Ascending aorta (tissue), 2 donors: ENCODE measurements at regions of chr3 and their contacts with region 1.

Region 1: DNA sequence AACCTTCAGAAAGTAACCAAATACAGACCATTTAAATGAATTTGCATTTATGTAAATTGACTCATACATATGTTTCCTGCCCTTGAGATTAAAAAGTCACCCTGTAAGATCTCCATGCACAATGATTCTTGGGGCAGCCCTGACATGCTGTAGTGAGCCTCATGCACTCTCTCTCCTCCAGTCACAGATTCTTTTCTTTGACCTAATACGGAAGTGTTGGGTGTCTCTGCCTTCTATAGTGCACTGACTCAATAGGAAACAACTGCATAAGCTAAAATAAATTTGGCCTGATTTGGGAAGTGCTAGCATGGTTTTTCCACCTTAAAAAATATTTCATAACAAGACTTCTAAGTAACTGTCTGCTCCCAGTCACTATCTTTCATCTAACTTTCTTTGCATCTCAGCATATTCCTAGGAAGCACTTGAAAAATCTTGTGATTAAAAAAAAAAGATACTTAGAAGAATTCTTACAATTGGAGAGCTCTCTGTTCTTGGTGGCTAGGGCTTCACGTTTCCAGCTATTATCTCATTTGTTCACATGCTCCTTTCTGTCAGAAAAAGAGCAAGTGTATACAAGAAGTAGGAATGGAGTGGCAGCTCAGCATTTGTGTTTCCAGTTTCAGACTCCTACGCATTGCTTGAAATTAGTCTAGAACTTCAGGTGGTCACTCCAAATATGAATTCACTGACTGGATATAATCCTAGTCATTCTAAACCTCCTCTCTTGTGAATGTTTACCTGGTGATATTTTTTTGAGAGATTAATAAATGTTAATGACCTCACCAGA is 207.9 kb upstream of the COL8A1 start:
- DNase-seq: no peak
- H3K4me3 ChIP-seq: no peak overlapping the region
- H3K27ac ChIP-seq: peak overlapping the region; percentile 1 to 24
- H3K4me1 ChIP-seq: peaks cover 0 to 13% of the 10 kb centered on the region in 2 donors
- H3K27me3 ChIP-seq: no peaks in the 10 kb centered on the region
- CTCF ChIP-seq: no peak

Region 2: DNA sequence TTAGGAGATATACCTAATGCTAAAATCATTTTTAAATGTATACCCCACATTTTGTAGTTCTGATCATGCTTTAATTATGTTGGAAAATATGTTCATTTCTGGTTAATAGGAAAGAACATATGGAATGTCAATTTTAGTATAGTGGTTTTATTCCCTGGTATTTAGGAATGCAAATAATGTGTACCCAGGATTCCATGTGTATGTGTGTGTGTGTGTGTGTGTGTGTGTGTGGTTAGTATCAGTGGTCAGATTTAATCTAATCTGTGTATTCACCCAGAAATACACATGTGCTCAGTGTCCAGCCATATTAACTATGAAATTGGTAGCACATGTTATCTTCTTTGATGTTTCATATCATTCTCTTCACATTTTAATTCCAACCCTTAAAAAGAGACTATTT is 295.6 kb before region 1 on chr3:
- intact Hi-C with region 1: no loop called
- DNase-seq: no peak
- H3K4me3 ChIP-seq: no peak overlapping the region
- H3K27ac ChIP-seq: no peak overlapping the region
- H3K4me1 ChIP-seq: peaks cover 0 to 3% of the 10 kb centered on the region in 2 donors
- H3K27me3 ChIP-seq: no peaks in the 10 kb centered on the region
- CTCF ChIP-seq: no peak

Region 3: DNA sequence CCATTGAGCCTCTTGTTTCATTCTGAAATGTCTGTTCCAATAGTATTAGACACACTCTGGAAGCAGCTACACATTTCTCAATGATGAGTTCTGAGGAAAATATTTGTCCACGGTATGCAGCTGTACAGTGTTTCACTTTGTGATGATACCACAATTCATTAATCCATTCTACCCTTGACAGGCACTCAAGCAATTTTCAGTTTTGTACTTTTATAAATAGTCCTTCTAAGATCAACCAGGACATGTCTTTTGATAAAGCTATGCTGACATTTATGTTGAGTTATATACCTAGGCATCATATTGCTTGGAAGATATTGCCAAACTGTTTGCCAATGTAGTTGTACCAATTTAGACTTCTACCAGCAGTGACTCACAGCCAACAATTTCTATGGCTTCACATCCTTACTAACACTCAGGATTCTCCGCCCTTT is 42.8 kb after region 1 on chr3:
- intact Hi-C with region 1: loop called (anchors 5 kb)
- DNase-seq: no peak
- H3K4me3 ChIP-seq: no peak overlapping the region
- H3K27ac ChIP-seq: peak overlapping the region; percentile 81 to 91
- H3K4me1 ChIP-seq: peaks cover 6 to 14% of the 10 kb centered on the region in 2 donors
- H3K27me3 ChIP-seq: no peaks in the 10 kb centered on the region
- CTCF ChIP-seq: no peak